Activated CD4-positive, alpha-beta T cell treated with anti-CD3 and anti-CD28 coated beads for 36 hours (primary cell): ENCODE measurements at regions of chr17 and their contacts with region 1.

Region 1: GRCh38 chr17:3048767-3049471 is 14.5 kb downstream of the OR1D5 start:
- DNase-seq: peak; percentile 98
- ATAC-seq: peak; percentile 99
- H3K4me3 Mint-ChIP-seq: peak overlapping the region; percentile 86
- H3K27ac Mint-ChIP-seq: peak overlapping the region; percentile 83
- H3K4me1 Mint-ChIP-seq: peaks cover 4% of the 10 kb centered on the region
- H3K27me3 Mint-ChIP-seq: no peaks in the 10 kb centered on the region

Region 2: GRCh38 chr17:3535253-3535995 is 486.5 kb after region 1 on chr17:
- CTCF ChIA-PET with region 1: no interaction called
- POLR2A ChIA-PET with region 1: no interaction called
- intact Hi-C with region 1: loop called in 1 of 2 experiments (anchors 1 kb)
- DNase-seq: peak; percentile 84
- ATAC-seq: peak; percentile 96
- H3K4me3 Mint-ChIP-seq: peak overlapping the region; percentile 21
- H3K27ac Mint-ChIP-seq: no peak overlapping the region
- H3K4me1 Mint-ChIP-seq: peaks cover 5% of the 10 kb centered on the region
- H3K27me3 Mint-ChIP-seq: peaks cover 3% of the 10 kb centered on the region